Right ventricle myocardium inferior (tissue), 1 donor: ENCODE measurements at regions of chr6 and their contacts with region 1.

Region 1: GRCh38 chr6:168469521-168469920 is 28.5 kb downstream of the SMOC2 start:
- DNase-seq: peak; percentile 87
- ATAC-seq: peak; percentile 98

Region 2: GRCh38 chr6:168345896-168346754 is 123.4 kb before region 1 on chr6:
- intact Hi-C with region 1: no loop called
- DNase-seq: no peak
- ATAC-seq: no peak

Region 3: DNA sequence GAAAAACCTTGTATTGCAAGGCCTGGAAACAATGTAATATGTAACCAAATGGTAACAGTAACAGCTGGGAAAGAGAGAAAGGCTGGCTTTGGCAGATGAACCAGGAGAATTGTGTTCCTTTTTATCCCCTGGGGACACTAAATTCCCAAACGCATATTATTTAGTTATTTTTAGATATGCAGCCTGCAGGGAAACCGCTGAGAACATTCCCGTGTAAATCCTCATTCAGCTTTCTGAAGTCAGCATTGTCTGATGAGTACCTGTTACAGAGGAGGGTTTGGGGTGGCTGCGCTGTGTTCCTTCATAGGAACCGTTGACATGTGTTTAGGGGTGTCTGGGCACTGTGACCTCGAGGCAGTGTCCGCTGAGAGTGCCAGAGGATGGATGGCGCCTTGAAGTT is 72.8 kb after region 1 on chr6:
- intact Hi-C with region 1: loop called (anchors 10 kb)
- DNase-seq: no peak
- ATAC-seq: peak; percentile 32